Activated CD4-positive, alpha-beta memory T cell treated with anti-CD3 and anti-CD28 coated beads, Interleukin-2, amount 10 ng/mL, durations not matched to agents 7 days and 5 days (primary cell): ENCODE measurements at regions of chr15 and their contacts with region 1.

Region 1: DNA sequence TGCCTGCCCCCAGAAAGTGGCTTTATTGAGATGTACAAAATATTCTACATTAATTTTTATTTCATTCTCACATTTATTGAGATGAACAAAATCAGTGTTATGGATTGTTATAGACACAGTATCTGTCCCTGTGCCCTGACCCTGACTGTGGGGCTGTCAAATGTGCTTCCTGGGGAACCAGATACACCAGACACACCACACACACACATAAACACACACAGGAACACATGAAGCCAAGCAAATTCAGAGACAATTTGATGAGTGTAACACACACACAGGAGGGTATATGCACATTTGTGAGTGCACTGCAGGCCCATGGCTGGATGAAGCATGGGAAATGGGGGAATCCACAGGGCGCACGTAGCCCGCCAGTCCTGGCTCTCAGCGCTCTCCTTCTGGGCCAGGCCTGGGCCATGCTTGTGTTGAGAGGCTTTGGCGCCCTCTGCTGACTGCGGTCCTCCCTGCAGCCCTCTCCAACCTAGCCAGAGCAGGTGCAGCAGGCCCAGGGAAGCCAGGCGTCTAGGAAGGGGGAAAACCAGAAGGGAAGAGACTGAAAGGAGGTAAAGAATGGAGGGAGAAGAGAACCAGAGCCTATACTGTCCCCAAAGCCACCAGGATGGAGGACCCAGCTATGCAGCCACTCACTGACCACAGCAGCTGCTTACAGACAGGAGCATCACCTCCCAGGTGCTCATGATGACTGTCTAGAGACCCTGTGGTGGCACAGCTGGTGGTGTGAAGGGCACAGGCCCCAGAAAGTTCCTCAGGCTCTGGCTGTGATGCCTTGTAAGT is 18.0 kb upstream of the LOXL1 start:
- DNase-seq: peak; percentile 83
- H3K4me3 Mint-ChIP-seq: no peak overlapping the region
- H3K27ac Mint-ChIP-seq: no peak overlapping the region
- H3K4me1 Mint-ChIP-seq: peaks cover 46% of the 10 kb centered on the region
- H3K27me3 Mint-ChIP-seq: no peaks in the 10 kb centered on the region

Region 2: GRCh38 chr15:73873889-73874511 is 34.2 kb before region 1 on chr15:
- CTCF ChIA-PET with region 1: interaction called, 109 read pairs
- POLR2A ChIA-PET with region 1: interaction called, 5 read pairs
- DNase-seq: peak; percentile 47
- H3K4me3 Mint-ChIP-seq: no peak overlapping the region
- H3K27ac Mint-ChIP-seq: no peak overlapping the region
- H3K4me1 Mint-ChIP-seq: no peaks in the 10 kb centered on the region
- H3K27me3 Mint-ChIP-seq: peaks cover 52% of the 10 kb centered on the region

Region 3: GRCh38 chr15:73891328-73892315 is 16.6 kb before region 1 on chr15:
- CTCF ChIA-PET with region 1: interaction called, 19 read pairs
- POLR2A ChIA-PET with region 1: no interaction called
- DNase-seq: no peak
- H3K4me3 Mint-ChIP-seq: no peak overlapping the region
- H3K27ac Mint-ChIP-seq: no peak overlapping the region
- H3K4me1 Mint-ChIP-seq: peaks cover 5% of the 10 kb centered on the region
- H3K27me3 Mint-ChIP-seq: peaks cover 30% of the 10 kb centered on the region

Region 4: DNA sequence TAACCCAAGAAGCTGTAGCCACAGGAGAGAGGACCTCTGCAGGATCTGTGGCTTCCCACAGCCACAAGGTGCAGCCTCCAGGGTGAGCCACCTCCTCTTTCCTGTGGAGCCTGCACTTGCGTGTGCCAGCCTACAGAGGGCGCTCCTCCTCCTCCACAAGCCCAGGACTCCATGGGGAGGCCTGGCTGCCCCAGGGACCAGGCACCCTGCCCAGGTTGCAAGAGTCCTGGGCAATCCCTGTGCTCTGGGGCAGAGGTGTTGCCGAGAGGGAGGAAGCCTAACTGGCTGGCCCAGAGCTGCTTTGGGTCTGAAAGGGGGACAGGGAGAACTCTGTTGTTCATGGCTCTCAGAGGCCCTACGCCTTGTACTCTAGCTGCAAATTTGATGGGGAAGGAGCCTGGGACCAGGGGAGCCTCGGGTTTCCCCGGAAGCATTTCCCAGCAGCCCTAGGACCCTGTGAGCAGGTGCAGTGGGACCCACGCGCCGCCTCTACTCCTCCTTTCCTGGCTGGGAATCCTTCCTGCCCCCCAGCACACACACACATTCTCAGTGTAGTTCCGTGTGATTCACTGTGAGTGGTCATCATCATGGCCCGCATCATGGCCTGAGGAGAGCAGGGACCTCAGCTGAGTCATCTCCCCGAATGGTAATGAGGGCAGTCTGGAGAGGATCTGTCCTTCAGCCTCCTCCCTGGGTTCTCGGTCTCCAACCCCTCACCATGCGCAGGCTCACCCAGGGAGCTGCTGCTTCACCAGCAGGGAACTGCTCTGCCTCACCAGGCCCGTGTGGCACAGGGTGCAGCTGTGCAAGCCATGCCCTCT is 10.6 kb before region 1 on chr15:
- CTCF ChIA-PET with region 1: interaction called, 20 read pairs
- POLR2A ChIA-PET with region 1: interaction called, 3 read pairs
- DNase-seq: peak; percentile 84
- H3K4me3 Mint-ChIP-seq: no peak overlapping the region
- H3K27ac Mint-ChIP-seq: no peak overlapping the region
- H3K4me1 Mint-ChIP-seq: peaks cover 13% of the 10 kb centered on the region
- H3K27me3 Mint-ChIP-seq: peaks cover 10% of the 10 kb centered on the region

Region 5: GRCh38 chr15:73921254-73921925 is 13.2 kb after region 1 on chr15:
- CTCF ChIA-PET with region 1: interaction called, 10 read pairs
- POLR2A ChIA-PET with region 1: interaction called, 20 read pairs
- DNase-seq: no peak
- H3K4me3 Mint-ChIP-seq: no peak overlapping the region
- H3K27ac Mint-ChIP-seq: peak overlapping the region; percentile 92
- H3K4me1 Mint-ChIP-seq: peaks cover 75% of the 10 kb centered on the region
- H3K27me3 Mint-ChIP-seq: no peaks in the 10 kb centered on the region

Region 6: DNA sequence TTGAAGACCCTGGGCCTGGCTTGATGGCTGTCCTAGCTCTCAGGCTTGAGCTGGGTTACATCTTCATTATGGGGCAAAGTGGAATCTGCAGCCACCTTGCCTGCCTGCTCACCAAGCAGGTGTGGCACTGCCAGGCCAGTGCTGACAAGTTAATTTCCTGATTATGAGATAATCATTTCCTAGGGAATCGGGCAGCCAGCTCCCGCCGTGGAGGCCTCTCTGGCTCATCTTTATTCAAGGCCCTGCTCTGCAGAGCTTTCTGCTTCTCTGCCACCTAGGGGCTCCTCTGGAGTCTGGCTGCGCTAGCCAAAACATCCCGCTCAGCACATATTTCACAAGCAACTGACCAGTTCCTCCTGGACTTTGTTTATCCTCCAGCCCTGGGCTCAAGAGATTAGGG is 28.0 kb after region 1 on chr15:
- CTCF ChIA-PET with region 1: no interaction called
- POLR2A ChIA-PET with region 1: no interaction called
- DNase-seq: no peak
- H3K4me3 Mint-ChIP-seq: no peak overlapping the region
- H3K27ac Mint-ChIP-seq: no peak overlapping the region
- H3K4me1 Mint-ChIP-seq: peaks cover 20% of the 10 kb centered on the region
- H3K27me3 Mint-ChIP-seq: no peaks in the 10 kb centered on the region